AG04449 (cell line): ENCODE measurements at regions of chr14 and their contacts with region 1.

Region 1: GRCh38 chr14:100864960-100865681 is 38.4 kb downstream of the RTL1 start:
- DNase-seq: no peak
- H3K4me3 ChIP-seq: no peak overlapping the region
- CTCF ChIP-seq: no peak

Region 2: DNA sequence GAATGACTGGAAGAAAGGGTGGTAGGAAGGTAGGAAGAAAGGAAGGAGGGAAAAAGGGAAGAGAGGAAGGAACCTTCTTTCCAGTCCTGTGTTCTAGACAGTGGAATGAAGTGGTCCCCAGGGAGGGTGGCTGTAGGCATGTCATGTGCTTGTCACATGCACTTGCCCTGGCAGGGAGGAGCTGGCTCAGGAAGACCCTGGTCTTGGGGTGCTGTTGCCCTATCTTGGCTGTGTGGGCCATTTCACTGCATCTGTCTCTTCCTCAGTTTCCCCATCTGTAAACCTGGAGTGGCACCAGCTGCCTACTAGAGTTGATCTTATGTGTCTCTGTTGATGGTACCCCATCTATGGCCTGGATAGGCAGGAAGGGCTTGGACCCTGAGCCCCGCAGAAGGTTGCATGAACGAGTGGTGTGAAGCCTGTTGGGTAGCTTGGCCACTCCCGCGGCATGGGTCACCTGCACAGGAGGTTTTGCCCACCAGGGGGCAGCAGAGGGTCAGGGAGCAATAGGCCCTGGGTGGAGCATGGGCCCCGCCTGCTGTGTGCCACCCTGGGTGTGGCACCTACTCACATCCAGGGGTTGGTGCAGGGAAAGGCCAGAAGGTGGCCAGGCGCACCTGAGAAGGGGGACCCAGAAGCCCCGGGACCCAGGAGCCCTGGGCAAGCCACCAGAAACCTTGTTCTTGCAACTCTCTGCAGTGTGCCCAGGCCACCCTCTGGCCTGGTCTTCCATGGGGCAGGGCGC is 14.1 kb before region 1 on chr14:
- CTCF ChIA-PET with region 1: interaction called, 19 read pairs
- POLR2A ChIA-PET with region 1: no interaction called
- DNase-seq: no peak
- H3K4me3 ChIP-seq: no peak overlapping the region
- CTCF ChIP-seq: peak; percentile 66

Region 3: DNA sequence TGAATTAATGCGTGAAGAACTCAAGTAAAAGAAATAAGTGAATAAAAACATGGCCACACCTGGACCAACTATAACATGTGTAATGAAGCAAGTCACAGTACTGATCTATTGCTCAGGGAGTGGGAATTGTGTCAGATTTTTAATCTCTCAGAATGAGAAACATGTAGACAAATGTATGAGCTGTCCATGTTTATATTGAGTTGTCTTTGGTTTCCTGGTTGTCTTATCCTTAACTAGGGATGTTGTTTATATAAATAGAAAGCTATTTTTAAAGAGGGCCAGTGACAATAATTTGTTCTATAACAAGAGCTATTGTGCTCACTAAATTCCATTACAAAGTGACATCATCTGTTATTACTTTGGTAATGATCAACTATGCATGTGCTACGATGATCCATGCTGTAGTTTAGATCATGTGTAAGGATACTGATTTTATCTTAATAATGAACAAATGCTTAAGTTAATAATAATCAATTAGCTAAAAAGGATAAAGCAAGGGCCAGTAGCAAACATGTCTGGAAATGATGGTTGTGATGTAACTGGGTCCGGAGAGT is 129.7 kb after region 1 on chr14:
- CTCF ChIA-PET with region 1: no interaction called
- POLR2A ChIA-PET with region 1: no interaction called
- DNase-seq: no peak
- H3K4me3 ChIP-seq: no peak overlapping the region
- CTCF ChIP-seq: no peak

Region 4: DNA sequence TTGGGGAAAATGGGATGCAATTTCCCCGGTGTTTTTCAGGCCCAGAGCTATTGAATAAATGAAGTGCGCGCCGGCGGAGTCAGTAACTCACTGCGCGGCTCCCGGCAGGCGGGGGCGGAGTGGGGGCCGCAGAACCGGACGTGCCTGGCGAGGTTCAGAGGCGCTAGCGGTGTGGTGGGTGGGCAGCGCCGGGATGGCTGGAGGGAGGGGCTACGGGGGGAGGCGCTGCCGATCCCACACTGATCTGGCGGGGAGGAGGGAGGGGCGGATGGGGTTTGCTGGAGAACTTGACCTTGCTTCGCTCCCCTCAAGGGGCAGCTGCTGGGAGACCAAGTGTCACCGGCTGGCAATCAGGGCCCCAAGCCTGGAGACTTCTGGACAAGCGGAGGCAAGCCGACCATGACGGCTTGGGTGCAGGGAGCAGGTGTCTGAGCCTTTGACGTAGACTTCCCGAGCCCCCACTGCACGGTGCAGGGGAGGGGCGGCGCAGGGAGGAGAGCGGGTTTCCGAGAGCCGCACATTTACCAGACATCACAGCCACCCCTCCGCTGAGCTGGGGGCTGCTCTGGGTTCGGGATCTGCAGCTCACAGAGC is 212.5 kb after region 1 on chr14:
- CTCF ChIA-PET with region 1: no interaction called
- POLR2A ChIA-PET with region 1: no interaction called
- DNase-seq: no peak
- H3K4me3 ChIP-seq: peak overlapping the region; percentile 36
- CTCF ChIP-seq: no peak